Right cardiac atrium (tissue), 5 donors: ENCODE measurements at regions of chr20 and their contacts with region 1.

Region 1: DNA sequence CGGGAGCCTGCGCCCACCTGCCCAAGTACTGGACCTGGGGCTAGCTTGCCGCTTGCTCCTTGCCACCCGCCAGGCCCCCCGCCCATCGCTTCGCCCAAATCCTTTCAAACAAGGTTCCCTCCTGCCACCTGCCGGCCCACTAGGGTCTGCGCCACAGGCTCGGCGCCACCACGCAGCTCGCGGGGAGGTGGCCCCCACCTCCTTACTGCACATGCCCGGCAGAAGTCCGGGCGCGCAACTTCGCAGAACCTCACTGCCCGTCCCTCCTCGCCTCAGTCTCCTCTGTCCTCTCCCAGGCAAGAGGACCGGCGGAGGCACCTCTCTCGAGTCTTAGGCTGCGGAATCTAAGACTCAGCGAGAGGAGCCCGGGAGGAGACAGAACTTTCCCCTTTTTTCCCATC is 11.2 kb downstream of the GNAS-AS1 start:
- DNase-seq: peak; percentile 52 to 77 (median 71)
- ATAC-seq: peak; percentile 74 to 85
- H3K4me3 ChIP-seq: no peak overlapping the region
- H3K27ac ChIP-seq: no peak overlapping the region
- H3K4me1 ChIP-seq: no peaks in the 10 kb centered on the region
- H3K27me3 ChIP-seq: no peaks in the 10 kb centered on the region

Region 2: DNA sequence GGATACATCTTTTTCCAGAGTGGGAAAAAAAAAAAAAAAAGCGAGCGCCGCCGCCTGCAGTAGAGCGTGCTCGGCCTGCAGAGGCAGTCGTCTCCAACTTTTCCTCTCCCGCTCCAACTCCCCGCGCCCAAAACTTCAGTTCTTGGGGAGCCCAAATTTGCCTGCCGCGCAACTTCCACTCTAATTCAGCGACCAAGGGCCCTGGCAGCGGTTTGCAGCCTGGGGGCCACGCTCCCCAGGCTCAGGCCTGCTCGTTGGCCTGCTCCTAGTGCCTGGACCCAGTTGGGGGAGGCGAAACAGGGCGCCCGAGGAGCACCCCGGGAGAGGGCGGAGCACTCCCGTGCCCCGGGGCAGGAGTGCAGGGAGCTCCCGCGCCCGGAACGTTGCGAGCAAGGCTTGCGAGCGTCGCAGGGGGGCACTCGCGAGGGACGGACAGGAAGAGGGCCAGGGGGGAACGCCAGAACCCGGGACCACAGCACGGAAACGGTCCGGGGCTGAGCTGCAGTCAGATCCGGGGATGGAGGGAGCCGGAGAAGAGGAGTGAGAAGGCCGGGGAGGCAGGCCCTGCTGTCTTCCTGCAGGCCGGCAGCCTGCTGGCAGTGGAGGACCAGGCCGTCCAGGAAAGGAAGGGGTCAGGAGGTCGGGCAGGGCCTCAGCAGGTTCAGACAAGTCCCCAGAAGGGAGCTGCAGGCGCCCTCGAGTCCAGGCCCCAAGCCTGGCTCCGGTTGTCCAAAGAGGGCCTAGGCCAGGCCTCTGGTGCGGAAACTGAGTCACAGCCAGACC is 188.5 kb before region 1 on chr20 and contains the start of gene STX16:
- intact Hi-C with region 1: loop called in 1 of 4 experiments (anchors 10 kb)
- DNase-seq: peak; percentile 90 to 96 (median 96)
- ATAC-seq: peak; percentile 96 to 97
- H3K4me3 ChIP-seq: peak within 1 kb of the TSS; percentile 87
- H3K27ac ChIP-seq: peak within 1 kb of the TSS; percentile 93
- H3K4me1 ChIP-seq: peaks cover 3% of the 10 kb centered on the region
- H3K27me3 ChIP-seq: no peaks in the 10 kb centered on the region
- total RNA-seq, gene STX16: 28.0 to 35.0 (median 33.3) TPM

Region 3: GRCh38 chr20:58753267-58753921 is 86.1 kb before region 1 on chr20:
- intact Hi-C with region 1: loop called in 1 of 4 experiments (anchors 10 kb)
- DNase-seq: no peak
- ATAC-seq: peak in 1 of 2 donors; percentile 25
- H3K4me3 ChIP-seq: no peak overlapping the region
- H3K27ac ChIP-seq: no peak overlapping the region
- H3K4me1 ChIP-seq: no peaks in the 10 kb centered on the region
- H3K27me3 ChIP-seq: no peaks in the 10 kb centered on the region